Posterior vena cava (tissue), 2 donors: ENCODE measurements at regions of chr3 and their contacts with region 1.

Region 1: DNA sequence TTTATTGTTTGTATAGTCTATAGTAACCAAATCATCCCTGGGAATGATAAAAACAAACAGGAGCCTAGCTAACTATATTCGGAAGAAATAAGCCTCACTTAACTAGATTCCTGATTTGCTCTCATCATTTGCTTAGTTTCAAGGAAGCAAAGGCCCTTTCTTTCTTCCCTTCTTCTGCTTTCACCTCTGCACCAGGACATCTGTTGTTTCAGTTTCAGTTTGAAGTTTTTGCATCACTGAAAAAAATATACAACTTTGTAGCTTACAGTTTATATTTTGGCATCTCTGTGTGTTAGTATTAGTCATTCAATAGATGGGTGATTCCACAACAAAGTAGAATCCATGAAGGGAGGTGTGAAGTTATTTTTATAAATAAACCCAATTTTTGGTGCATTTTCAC is 113.6 kb upstream of the SNTN start:
- DNase-seq: no peak

Region 2: DNA sequence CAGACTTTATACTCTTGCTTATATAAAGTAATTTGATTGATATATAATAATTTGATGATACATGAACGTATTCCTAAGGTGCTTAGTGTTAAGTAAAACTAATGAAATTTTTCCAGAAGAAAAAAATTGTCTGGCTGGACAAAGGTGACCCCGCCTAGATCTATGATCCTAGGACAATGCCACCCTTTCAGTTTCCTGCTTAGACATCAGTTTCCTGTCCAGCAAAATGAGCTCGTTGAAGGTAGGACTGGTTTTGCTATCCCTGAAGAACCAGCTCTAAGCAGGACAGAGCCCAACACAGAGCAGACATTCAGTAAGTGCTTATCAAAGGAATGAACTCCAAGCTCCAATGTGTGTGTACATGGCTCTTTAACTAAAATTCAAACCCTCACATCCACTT is 32.8 kb after region 1 on chr3:
- intact Hi-C with region 1: loop called in 1 of 2 experiments (anchors 2 kb)
- DNase-seq: no peak